Activated CD4-positive, alpha-beta memory T cell treated with anti-CD3 and anti-CD28 coated beads for 36 hours (primary cell): ENCODE measurements at regions of chr5 and their contacts with region 1.

Region 1: DNA sequence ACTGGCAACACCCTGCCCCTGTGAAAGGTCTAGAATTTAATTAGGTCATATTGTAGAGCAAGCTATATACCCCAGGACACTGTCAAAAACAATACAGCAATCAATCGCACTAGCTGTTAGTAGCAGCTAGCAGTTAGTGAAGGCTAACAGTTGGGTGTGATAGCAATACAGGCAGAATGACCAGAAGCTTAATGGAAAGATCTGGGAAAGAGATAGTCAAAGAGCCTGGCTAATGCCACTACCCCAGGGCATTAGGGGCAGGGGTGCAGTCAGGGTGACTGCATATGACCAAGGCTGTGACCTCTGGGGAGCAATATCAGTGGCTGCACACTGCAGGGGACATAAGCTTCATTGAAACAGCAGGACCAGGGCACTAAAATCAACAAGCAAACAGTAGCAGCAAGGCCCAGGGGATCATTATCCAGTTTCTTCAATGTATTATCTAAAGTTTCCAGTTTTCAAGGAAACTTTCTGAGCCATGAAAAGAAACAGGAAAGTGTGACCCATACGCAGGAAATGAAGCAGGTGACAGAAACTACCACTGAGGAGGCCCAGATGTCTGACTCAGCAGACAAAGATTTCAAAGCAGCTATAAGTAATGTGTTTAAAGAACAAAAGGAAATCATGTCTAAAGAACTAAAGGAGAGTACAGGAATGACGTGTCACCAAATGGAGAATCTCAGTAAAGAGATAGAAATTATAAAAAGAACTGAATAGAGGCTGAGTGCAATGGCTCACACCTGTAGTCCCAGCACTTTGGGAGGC is 82.4 kb downstream of the ZNF354C start:
- DNase-seq: peak; percentile 61
- H3K4me3 Mint-ChIP-seq: no peak overlapping the region
- H3K27ac Mint-ChIP-seq: peak overlapping the region; percentile 77
- H3K4me1 Mint-ChIP-seq: peaks cover 26% of the 10 kb centered on the region
- H3K27me3 Mint-ChIP-seq: no peaks in the 10 kb centered on the region

Region 2: GRCh38 chr5:178626484-178627258 is 515.9 kb before region 1 on chr5 and contains the start of gene CLK4:
- CTCF ChIA-PET with region 1: no interaction called
- POLR2A ChIA-PET with region 1: no interaction called
- intact Hi-C with region 1: loop called (anchors 2 kb)
- DNase-seq: peak; percentile 97
- H3K4me3 Mint-ChIP-seq: peak within 1 kb of the TSS; percentile 92
- H3K27ac Mint-ChIP-seq: peak within 1 kb of the TSS; percentile 98
- H3K4me1 Mint-ChIP-seq: peaks cover 28% of the 10 kb centered on the region
- H3K27me3 Mint-ChIP-seq: no peaks in the 10 kb centered on the region
- total RNA-seq, gene CLK4: 25.1 to 26.0 TPM

Region 3: DNA sequence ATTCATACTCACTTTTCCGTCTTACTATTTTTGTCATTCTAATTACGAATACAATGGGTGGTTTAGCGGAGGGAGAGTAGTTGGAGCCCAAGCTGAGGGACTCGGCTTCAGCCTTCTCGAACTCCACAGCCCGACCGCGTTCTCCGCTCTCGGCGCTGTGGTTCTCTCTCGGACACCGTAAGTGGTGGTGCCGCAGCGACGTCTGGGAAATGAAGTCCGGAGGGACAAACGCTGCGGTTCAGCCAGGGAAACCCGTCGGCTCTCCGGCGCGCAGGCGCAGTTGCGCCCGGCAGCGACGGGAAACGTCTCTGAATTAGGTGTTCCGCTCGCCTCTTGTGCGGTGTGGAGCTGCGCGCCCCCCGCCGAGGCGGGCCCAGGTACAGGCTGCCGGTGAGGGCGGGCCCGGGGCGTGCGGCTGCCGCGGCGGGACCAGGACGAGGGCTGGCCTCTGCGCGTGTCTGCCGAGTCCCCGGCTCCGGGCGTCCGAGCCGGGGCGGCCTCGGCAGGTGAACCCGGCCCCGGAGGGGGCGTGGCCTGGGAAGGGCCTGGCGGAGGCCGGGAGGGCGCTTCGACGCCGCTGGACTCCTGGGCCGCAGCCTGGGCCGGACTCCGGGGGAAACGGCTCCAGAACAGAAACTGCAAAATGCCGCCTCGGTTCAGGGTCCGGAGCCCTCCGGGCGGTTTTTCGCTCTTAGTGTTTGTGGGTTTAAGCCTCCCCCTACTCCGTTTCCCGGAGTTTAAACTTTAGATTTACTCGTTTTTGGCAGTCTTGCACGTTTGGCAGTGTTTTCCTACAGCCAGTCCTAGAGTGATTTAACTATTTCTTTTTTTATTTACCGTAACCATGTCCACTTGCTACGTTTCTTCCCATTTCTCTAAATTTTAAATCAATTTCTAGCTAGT is 118.8 kb before region 1 on chr5 and contains the start of gene ZNF879:
- CTCF ChIA-PET with region 1: no interaction called
- POLR2A ChIA-PET with region 1: no interaction called
- intact Hi-C with region 1: loop called (anchors 1 kb)
- DNase-seq: peak; percentile 96
- H3K4me3 Mint-ChIP-seq: peak within 1 kb of the TSS; percentile 96
- H3K27ac Mint-ChIP-seq: peak within 1 kb of the TSS; percentile 83
- H3K4me1 Mint-ChIP-seq: peaks cover 7% of the 10 kb centered on the region
- H3K27me3 Mint-ChIP-seq: peaks cover 1% of the 10 kb centered on the region
- total RNA-seq, gene ZNF879: 2.4 TPM

Region 4: GRCh38 chr5:179060116-179061008 is 82.3 kb before region 1 on chr5 and contains the start of gene ZNF354C:
- CTCF ChIA-PET with region 1: interaction called, 5 read pairs
- POLR2A ChIA-PET with region 1: interaction called, 4 read pairs
- intact Hi-C with region 1: loop called (anchors 2 kb)
- DNase-seq: peak; percentile 91
- H3K4me3 Mint-ChIP-seq: peak within 1 kb of the TSS; percentile 82
- H3K27ac Mint-ChIP-seq: peak within 1 kb of the TSS; percentile 88
- H3K4me1 Mint-ChIP-seq: peaks cover 30% of the 10 kb centered on the region
- H3K27me3 Mint-ChIP-seq: peaks cover 6% of the 10 kb centered on the region
- total RNA-seq, gene ZNF354C: 5.9 to 6.0 TPM

Region 5: GRCh38 chr5:179166886-179167841 is 24.5 kb after region 1 on chr5:
- CTCF ChIA-PET with region 1: interaction called, 7 read pairs
- POLR2A ChIA-PET with region 1: no interaction called
- intact Hi-C with region 1: loop called (anchors 2 kb)
- DNase-seq: peak; percentile 72
- H3K4me3 Mint-ChIP-seq: peak overlapping the region; percentile 32
- H3K27ac Mint-ChIP-seq: no peak overlapping the region
- H3K4me1 Mint-ChIP-seq: peaks cover 3% of the 10 kb centered on the region
- H3K27me3 Mint-ChIP-seq: peaks cover 8% of the 10 kb centered on the region